K562 (cell line): ENCODE measurements at regions of chr6 and their contacts with region 1.

Region 1: DNA sequence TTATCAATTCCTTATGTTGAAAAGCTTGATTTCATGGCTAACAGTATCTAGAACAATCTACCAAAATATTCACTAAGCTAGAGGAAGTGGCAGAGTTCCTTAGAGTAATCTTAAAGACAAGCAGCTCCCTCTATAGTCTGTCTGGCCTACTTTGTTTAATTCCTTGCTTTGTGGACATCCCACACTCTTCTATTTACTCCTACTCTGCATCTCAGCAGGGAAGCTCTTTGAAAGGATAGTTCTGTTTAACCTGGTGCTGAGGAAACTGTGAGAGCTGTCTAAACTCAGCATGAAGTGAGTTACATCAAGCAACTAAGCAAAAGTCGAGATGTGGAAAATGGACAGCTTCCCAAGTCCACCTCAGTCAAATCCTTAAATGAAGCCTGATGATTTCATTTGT is 4.3 kb downstream of the REV3L start:
- DNase-seq: peak in 2 of 4 experiments; percentile 49 to 64
- ATAC-seq: peak; percentile 64
- H3K4me3 ChIP-seq: no peak overlapping the region
- H3K27ac ChIP-seq: peak overlapping the region; percentile 8; the same call in 1 of the 3 replicates
- H3K4me1 ChIP-seq: peaks cover 9 to 21% of the 10 kb centered on the region in 2 experiments; a peak in 4 of 5 replicates
- H3K27me3 ChIP-seq: no peaks in the 10 kb centered on the region
- CTCF ChIP-seq: peak; percentile 36 to 76 (median 43); a peak in 5 of 6 replicates
- EP300 ChIP-seq: no peak
- POLR2A ChIP-seq: no peak
- RAD21 ChIP-seq: peak; percentile 78 to 85

Region 2: DNA sequence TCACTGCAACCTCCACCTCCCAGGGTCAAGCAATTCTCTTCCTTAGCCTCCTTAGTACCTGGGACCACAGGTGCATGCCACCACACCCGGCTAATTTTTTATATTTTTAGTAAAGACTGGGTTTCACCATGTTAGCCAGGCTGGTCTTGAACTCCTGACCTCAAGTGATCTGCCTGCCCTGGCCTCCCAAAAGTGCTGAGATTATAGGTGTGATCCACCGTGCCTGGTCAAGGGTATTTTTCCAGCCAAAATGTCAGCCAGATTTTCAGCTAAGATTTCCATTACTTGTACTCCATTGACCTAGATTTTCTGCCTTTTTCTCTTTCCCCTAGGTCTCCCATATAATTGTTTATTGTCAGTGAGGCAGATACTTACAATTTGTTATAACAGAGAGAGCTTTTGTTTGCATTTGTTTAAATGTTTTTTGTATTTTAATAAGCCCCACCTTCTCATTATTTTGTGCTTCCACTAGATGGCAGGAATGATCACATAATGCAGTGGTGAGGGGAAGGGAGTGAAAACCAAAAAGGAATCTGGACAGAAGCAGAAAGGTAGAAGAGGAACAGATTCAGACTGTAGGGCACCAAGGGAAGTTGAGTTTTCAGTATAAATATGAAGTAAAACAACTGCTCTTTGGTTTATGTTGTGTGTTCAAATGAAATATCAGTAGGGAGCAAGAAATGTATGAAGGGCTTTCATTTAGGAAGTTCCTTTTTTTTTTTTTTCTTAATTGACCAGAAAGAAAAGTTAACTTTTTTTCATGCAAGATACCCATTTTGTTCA is 467.2 kb before region 1 on chr6:
- CTCF ChIA-PET with region 1: no interaction called
- POLR2A ChIA-PET with region 1: no interaction called
- in situ Hi-C with region 1: no loop called
- intact Hi-C with region 1: loop called (anchors 10 kb)
- DNase-seq: peak in 3 of 4 experiments; percentile 27 to 40 (median 33)
- ATAC-seq: peak; percentile 86
- H3K4me3 ChIP-seq: no peak overlapping the region
- H3K27ac ChIP-seq: no peak overlapping the region
- H3K4me1 ChIP-seq: no peaks in the 10 kb centered on the region
- H3K27me3 ChIP-seq: no peaks in the 10 kb centered on the region
- CTCF ChIP-seq: peak; percentile 36 to 74 (median 52); a peak in 5 of 6 replicates
- EP300 ChIP-seq: no peak
- POLR2A ChIP-seq: no peak
- RAD21 ChIP-seq: peak; percentile 68 to 73

Region 3: DNA sequence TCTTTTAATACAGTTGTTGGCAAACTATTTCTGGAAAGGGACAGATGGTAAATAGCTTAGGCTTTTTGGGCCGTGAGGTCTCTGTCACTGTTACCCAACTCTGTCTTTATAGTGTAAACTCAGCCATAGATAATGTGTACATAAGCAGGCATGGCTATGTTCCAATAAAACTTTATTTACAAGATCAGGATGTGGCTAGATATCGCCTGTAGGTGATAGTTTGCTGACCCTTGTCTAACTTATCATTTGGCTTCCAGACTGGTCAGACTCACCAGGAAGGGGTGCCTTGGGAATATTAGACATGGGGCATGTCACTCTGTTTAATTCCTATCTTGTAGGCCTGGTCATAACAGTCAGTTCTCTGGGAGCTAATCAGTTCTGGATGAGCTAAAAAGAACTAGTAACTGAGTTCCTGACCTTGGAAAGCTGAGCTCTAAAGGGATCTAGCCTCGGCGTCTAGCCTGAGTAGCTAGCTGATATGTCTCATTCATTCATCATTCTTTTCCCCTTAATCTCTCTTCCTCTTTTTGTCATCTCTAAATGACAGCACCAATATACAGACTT is 227.9 kb before region 1 on chr6:
- CTCF ChIA-PET with region 1: no interaction called
- POLR2A ChIA-PET with region 1: interaction called, 3 read pairs
- in situ Hi-C with region 1: loop called (anchors 5 kb)
- intact Hi-C with region 1: no loop called
- DNase-seq: peak; percentile 29 to 59 (median 32)
- ATAC-seq: peak; percentile 67
- H3K4me3 ChIP-seq: no peak overlapping the region
- H3K27ac ChIP-seq: peak overlapping the region; percentile 29; the same call in 1 of the 3 replicates
- H3K4me1 ChIP-seq: peaks cover 10 to 19% of the 10 kb centered on the region in 2 experiments
- H3K27me3 ChIP-seq: no peaks in the 10 kb centered on the region
- CTCF ChIP-seq: no peak
- EP300 ChIP-seq: no peak
- POLR2A ChIP-seq: no peak
- RAD21 ChIP-seq: no peak

Region 4: DNA sequence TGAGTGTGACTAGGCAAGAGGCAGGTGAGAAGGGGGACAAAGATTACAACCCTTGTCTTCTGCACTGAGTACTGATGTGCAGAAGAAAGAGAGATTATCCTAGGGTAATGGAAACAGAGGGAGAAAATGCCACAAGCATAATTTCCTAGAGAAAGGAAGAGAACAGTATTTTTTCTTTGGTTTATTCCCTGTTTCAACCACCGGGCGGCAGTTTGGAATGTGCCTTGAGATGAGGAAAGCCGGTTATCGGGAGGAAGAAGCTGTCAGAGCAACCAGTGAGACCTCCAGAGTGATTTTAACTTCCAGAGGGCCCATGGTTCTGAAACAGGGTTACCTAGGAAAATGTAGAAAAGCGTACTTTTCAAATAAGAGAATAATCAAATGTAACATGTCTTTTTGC is 117.1 kb before region 1 on chr6:
- CTCF ChIA-PET with region 1: interaction called, 8 read pairs
- POLR2A ChIA-PET with region 1: no interaction called
- in situ Hi-C with region 1: no loop called
- intact Hi-C with region 1: loop called (anchors 1 kb)
- DNase-seq: peak; percentile 20 to 51 (median 28)
- ATAC-seq: peak; percentile 78
- H3K4me3 ChIP-seq: no peak overlapping the region
- H3K27ac ChIP-seq: no peak overlapping the region
- H3K4me1 ChIP-seq: no peaks in the 10 kb centered on the region
- H3K27me3 ChIP-seq: no peaks in the 10 kb centered on the region
- CTCF ChIP-seq: peak; percentile 41 to 56 (median 49)
- EP300 ChIP-seq: no peak
- POLR2A ChIP-seq: no peak
- RAD21 ChIP-seq: peak; percentile 53 to 77

Region 5: GRCh38 chr6:111377558-111378120 is 101.1 kb before region 1 on chr6:
- CTCF ChIA-PET with region 1: no interaction called
- POLR2A ChIA-PET with region 1: no interaction called
- in situ Hi-C with region 1: no loop called
- intact Hi-C with region 1: loop called (anchors 5 kb)
- DNase-seq: peak; percentile 58 to 69 (median 63)
- ATAC-seq: peak; percentile 93
- H3K4me3 ChIP-seq: no peak overlapping the region
- H3K27ac ChIP-seq: peak overlapping the region; percentile 37
- H3K4me1 ChIP-seq: peaks cover 4 to 13% of the 10 kb centered on the region in 2 experiments; a peak in 3 of 5 replicates
- H3K27me3 ChIP-seq: no peaks in the 10 kb centered on the region
- CTCF ChIP-seq: no peak
- EP300 ChIP-seq: peak; percentile 71; the same call in 1 of the 2 replicates
- POLR2A ChIP-seq: no peak
- RAD21 ChIP-seq: no peak

Region 6: GRCh38 chr6:111406200-111406721 is 72.5 kb before region 1 on chr6:
- CTCF ChIA-PET with region 1: no interaction called
- POLR2A ChIA-PET with region 1: no interaction called
- in situ Hi-C with region 1: no loop called
- intact Hi-C with region 1: no loop called
- DNase-seq: no peak
- ATAC-seq: no peak
- H3K4me3 ChIP-seq: no peak overlapping the region
- H3K27ac ChIP-seq: no peak overlapping the region
- H3K4me1 ChIP-seq: peaks cover 0 to 11% of the 10 kb centered on the region in 2 experiments; a peak in 2 of 5 replicates
- H3K27me3 ChIP-seq: no peaks in the 10 kb centered on the region
- CTCF ChIP-seq: no peak
- EP300 ChIP-seq: no peak
- POLR2A ChIP-seq: no peak
- RAD21 ChIP-seq: no peak